PC-3 (cell line): ENCODE measurements at regions of chr12 and their contacts with region 1.

Region 1: DNA sequence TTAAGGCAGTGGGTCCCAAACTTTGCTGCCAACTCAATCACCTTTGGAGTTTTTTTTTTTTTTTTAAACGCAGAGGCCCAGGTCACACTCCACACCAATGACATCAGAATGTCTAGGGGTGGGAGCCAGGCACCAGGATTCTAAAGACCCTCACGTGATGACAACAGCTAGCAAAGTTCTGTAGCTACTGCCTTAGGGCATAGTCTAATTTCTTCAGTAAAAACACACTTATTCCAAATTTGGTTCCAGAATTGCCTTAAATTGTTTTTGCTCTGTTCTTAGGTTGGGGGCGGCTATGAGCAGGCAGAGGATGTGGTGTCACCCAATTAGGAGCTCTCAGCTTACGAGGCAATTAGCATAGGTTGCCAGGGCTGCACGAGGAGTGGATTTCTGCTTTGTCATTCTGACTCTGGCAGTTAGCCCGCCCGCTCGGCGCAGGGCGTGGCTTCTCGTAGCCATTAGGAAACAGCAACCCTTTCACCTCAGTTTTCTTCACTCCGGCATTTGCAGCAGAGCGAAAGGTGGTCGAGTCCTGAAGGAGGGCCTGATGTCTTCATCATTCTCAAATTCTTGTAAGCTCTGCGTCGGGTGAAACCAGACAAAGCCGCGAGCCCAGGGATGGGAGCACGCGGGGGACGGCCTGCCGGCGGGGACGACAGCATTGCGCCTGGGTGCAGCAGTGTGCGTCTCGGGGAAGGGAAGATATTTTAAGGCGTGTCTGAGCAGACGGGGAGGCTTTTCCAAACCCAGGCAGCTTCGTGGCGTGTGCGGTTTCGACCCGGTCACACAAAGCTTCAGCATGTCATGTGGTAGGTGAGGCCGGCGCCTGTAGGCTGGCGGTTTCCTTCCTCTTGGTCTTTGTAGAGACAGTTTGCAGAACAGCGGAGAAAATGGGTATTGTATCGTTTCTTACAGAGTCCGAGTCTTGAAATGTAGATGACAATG is 16.7 kb upstream of the EID3 start:
- DNase-seq: peak; percentile 99
- ATAC-seq: peak; percentile 63
- H3K4me3 ChIP-seq: peak overlapping the region; percentile 88
- H3K27ac ChIP-seq: peak overlapping the region; percentile 98
- H3K4me1 ChIP-seq: peaks cover 47% of the 10 kb centered on the region
- H3K27me3 ChIP-seq: no peaks in the 10 kb centered on the region
- CTCF ChIP-seq: no peak

Region 2: GRCh38 chr12:103956516-103957027 is 330.2 kb before region 1 on chr12:
- CTCF ChIA-PET with region 1: no interaction called
- POLR2A ChIA-PET with region 1: interaction called, 4 read pairs
- intact Hi-C with region 1: loop called (anchors 10 kb)
- DNase-seq: peak; percentile 34
- ATAC-seq: peak; percentile 41
- H3K4me3 ChIP-seq: peak overlapping the region; percentile 74
- H3K27ac ChIP-seq: peak overlapping the region; percentile 91
- H3K4me1 ChIP-seq: peaks cover 24% of the 10 kb centered on the region
- H3K27me3 ChIP-seq: no peaks in the 10 kb centered on the region
- CTCF ChIP-seq: no peak

Region 3: GRCh38 chr12:104106965-104107364 is 179.8 kb before region 1 on chr12:
- CTCF ChIA-PET with region 1: no interaction called
- POLR2A ChIA-PET with region 1: no interaction called
- intact Hi-C with region 1: no loop called
- DNase-seq: no peak
- ATAC-seq: no peak
- H3K4me3 ChIP-seq: no peak overlapping the region
- H3K27ac ChIP-seq: no peak overlapping the region
- H3K4me1 ChIP-seq: no peaks in the 10 kb centered on the region
- H3K27me3 ChIP-seq: no peaks in the 10 kb centered on the region
- CTCF ChIP-seq: no peak

Region 4: DNA sequence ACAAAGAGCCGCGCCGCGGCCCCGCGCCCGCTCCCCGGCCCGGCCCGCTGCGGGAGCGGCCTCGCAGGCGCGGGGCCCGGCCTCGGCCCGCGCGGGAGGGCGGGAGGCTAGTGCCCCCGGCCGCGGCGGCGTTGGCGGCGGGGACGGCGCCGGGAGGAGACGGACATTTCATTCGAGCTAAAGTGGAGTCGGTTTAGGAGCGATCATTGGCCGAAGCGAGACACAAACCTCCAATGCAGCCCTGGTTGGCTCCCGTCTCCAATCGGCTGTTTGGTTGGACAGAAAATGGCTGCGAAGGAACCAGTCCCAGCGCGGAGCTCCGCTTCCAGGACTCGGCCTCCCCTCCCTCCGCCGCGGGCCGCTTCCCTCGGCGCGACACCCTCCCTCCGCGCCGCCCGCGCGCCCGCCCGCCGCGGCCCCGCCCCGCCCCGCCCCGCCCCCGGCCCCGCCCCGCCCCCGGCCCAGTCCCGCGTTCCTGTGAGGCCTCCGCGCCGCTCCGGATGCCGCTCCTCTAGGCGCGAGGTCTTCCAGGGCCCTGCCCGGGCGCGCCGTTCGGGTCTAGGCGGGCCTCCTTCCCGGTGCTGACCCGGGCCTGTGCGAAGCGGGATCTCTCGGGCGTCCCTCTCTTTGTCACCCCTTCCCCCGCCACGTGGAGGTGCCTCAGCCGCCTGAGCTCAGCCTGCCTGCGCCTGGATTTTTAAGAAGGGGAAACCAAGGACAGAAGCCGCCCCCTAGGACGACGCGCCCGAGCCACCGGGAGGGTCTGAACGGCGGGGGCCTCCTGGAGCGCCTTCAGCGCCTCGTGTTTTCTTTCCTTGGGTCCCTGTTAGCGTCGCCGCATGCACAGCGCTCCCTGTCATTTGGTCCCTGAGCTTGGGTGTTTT is 148.7 kb before region 1 on chr12 and contains the start of gene NFYB:
- CTCF ChIA-PET with region 1: no interaction called
- POLR2A ChIA-PET with region 1: no interaction called
- intact Hi-C with region 1: loop called (anchors 5 kb)
- DNase-seq: peak; percentile 99
- ATAC-seq: peak; percentile 95
- H3K4me3 ChIP-seq: peak within 1 kb of the TSS; percentile 98
- H3K27ac ChIP-seq: no peak within 1 kb of the TSS
- H3K4me1 ChIP-seq: peaks cover 25% of the 10 kb centered on the region
- H3K27me3 ChIP-seq: no peaks in the 10 kb centered on the region
- CTCF ChIP-seq: no peak
- total RNA-seq, gene NFYB: 20.6 and 21.7 TPM in 2 replicates

Region 5: GRCh38 chr12:104177663-104178501 is 108.9 kb before region 1 on chr12:
- CTCF ChIA-PET with region 1: interaction called, 10 read pairs
- POLR2A ChIA-PET with region 1: no interaction called
- intact Hi-C with region 1: no loop called
- DNase-seq: peak; percentile 85
- ATAC-seq: peak; percentile 91
- H3K4me3 ChIP-seq: no peak overlapping the region
- H3K27ac ChIP-seq: 0 out of 2 replicates have a peak overlapping the region, but pooled peaks have one; percentile 15
- H3K4me1 ChIP-seq: peaks cover 11% of the 10 kb centered on the region
- H3K27me3 ChIP-seq: no peaks in the 10 kb centered on the region
- CTCF ChIP-seq: peak; percentile 81

Region 6: GRCh38 chr12:104201238-104202001 is 85.4 kb before region 1 on chr12:
- CTCF ChIA-PET with region 1: no interaction called
- POLR2A ChIA-PET with region 1: no interaction called
- intact Hi-C with region 1: loop called (anchors 5 kb)
- DNase-seq: peak; percentile 84
- ATAC-seq: peak; percentile 93
- H3K4me3 ChIP-seq: no peak overlapping the region
- H3K27ac ChIP-seq: 0 out of 2 replicates have a peak overlapping the region, but pooled peaks have one; percentile 0
- H3K4me1 ChIP-seq: peaks cover 6% of the 10 kb centered on the region; the same call in 1 of the 2 replicates
- H3K27me3 ChIP-seq: no peaks in the 10 kb centered on the region
- CTCF ChIP-seq: peak; percentile 98

Region 7: GRCh38 chr12:104215638-104216297 is 71.0 kb before region 1 on chr12 and contains the start of gene TXNRD1:
- CTCF ChIA-PET with region 1: interaction called, 3 read pairs
- POLR2A ChIA-PET with region 1: interaction called, 22 read pairs
- intact Hi-C with region 1: loop called (anchors 1 kb)
- DNase-seq: no peak
- ATAC-seq: no peak
- H3K4me3 ChIP-seq: no peak within 1 kb of the TSS
- H3K27ac ChIP-seq: peak within 1 kb of the TSS; percentile 63
- H3K4me1 ChIP-seq: peaks cover 33% of the 10 kb centered on the region
- H3K27me3 ChIP-seq: no peaks in the 10 kb centered on the region
- CTCF ChIP-seq: no peak
- total RNA-seq, gene TXNRD1: 419 and 430 TPM in 2 replicates

Region 8: GRCh38 chr12:104276273-104277131 is 10.3 kb before region 1 on chr12:
- CTCF ChIA-PET with region 1: interaction called, 7 read pairs
- POLR2A ChIA-PET with region 1: interaction called, 51 read pairs
- intact Hi-C with region 1: loop called (anchors 1 kb)
- DNase-seq: peak; percentile 95
- ATAC-seq: peak; percentile 44
- H3K4me3 ChIP-seq: peak overlapping the region; percentile 64
- H3K27ac ChIP-seq: peak overlapping the region; percentile 99
- H3K4me1 ChIP-seq: peaks cover 75% of the 10 kb centered on the region
- H3K27me3 ChIP-seq: no peaks in the 10 kb centered on the region
- CTCF ChIP-seq: no peak

Region 9: DNA sequence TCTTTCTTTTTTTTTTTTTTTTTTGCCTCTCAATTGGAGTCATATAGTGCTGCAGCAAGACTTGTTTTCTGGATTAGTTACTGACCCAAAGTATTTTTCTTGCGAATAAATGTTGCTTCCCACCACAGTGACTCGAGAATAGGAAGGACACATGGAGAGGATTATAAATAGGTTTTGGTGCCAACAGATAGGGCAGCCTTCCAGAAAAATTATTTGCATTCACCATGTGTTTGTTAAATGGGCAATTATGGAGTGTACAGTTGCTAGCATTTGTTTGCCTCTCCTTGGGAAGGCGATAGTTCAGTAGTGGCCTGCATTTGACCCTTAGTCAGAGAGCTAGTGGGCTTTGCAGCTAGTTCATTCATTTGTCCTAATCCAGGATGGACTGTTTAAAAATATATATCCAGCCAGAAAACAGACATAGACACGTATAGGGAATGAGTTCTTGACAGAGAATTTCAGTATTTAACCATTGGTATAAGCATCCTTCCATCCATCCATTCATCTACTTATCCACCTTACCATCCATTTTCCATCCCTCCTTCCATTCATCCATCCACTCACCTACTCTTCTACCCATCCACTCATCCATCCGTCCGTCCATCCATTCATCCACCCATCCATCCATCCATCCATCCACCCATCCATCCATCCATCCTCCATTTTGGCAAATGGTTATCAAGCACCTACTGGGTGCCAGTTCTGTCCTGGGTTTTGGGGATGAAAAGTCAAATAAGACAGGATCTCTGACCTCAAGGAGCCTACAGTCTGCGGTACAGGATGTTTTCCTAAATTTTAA is 237.4 kb after region 1 on chr12:
- CTCF ChIA-PET with region 1: no interaction called
- POLR2A ChIA-PET with region 1: no interaction called
- intact Hi-C with region 1: no loop called
- DNase-seq: no peak
- ATAC-seq: no peak
- H3K4me3 ChIP-seq: no peak overlapping the region
- H3K27ac ChIP-seq: no peak overlapping the region
- H3K4me1 ChIP-seq: peaks cover 20% of the 10 kb centered on the region
- H3K27me3 ChIP-seq: no peaks in the 10 kb centered on the region
- CTCF ChIP-seq: no peak